Mammary epithelial cell (primary cell): ENCODE measurements at regions of chr15 and their contacts with region 1.

Region 1: DNA sequence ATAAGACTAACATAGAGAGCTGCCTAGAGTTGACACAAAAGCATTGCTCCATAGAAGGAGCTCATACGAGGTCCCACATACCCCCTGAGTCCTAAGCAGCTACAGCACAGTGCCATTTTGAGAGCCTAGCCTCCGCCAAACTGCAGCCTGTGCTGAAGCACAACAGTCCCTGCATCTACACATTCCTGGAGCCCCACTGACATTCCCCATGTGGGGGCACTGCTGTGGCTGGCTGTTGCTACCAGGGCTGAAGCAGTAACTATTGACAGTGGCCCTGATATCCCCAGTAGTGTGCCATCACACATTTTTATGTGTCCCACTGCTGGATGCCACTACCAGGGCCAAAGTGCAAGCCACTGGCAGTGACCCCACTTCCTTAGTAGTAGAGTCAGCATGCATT is 80.3 kb downstream of the CERS3 start:
- DNase-seq: no peak
- H3K4me3 ChIP-seq: no peak overlapping the region
- H3K27ac ChIP-seq: no peak overlapping the region
- H3K4me1 ChIP-seq: no peaks in the 10 kb centered on the region
- H3K27me3 ChIP-seq: no peaks in the 10 kb centered on the region
- CTCF ChIP-seq: no peak

Region 2: DNA sequence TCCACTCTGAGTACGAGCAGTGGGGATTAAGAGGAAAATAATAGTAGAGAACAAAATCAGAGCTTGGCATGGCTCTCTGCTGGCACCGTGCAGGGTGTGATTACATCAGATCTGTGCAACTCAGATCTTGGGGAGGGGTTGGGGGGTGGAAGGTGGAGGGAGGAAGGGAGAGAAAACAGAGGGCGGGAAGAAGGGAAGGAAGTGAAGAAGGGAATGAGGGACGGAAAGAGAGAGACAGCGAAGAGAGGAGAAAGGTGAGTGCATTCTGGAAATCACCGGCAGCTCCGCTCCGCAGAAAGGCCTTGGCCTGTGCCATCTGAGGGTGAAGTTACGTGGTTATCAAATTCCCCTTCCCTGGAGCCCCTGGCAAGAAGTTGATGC is 75.8 kb before region 1 on chr15:
- CTCF ChIA-PET with region 1: no interaction called
- dilution Hi-C with region 1: no loop called
- in situ Hi-C with region 1: no loop called
- intact Hi-C with region 1: no loop called
- DNase-seq: no peak
- H3K4me3 ChIP-seq: no peak overlapping the region
- H3K27ac ChIP-seq: no peak overlapping the region
- H3K4me1 ChIP-seq: no peaks in the 10 kb centered on the region
- H3K27me3 ChIP-seq: peaks cover 14% of the 10 kb centered on the region
- CTCF ChIP-seq: no peak

Region 3: DNA sequence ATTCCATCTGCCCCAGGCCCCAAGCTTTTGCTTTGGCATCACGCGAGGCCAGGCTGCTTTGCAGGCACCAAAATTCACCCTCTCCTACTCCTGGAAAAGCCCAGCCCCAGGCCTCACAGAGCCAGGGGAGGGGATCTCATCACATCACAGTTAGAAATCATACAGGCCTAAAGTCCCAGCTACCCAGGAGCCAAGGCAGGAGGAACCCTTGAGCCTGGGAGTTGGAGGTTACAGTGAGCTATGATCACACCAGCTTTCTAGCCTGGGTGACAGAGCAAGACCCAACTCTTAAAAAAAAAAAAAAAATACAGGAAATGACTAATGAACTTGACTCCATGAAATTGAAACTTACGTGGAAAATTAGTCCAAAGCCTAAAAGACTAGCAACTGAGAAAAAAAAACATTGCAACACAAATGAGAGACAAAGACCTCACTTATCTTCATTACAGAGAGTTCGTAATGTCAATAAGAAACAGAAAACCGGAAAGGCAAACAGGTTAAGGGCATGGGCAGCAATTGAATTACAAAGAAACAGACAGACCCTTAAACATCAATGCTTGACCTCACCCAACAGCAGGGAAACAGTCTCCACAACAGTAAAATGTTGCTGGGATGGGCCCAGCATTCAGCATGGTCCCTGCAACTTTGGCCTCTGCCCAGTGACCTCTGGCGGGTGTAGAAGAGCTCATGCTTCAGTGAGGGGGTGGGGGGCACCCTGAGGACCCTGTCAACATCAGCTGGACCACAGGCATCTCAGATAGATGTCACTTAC is 622.2 kb after region 1 on chr15:
- CTCF ChIA-PET with region 1: no interaction called
- dilution Hi-C with region 1: loop called (anchors 5 kb)
- in situ Hi-C with region 1: no loop called
- intact Hi-C with region 1: loop called (anchors 10 kb)
- DNase-seq: peak; percentile 90
- H3K4me3 ChIP-seq: no peak overlapping the region
- H3K27ac ChIP-seq: peak overlapping the region; percentile 90
- H3K4me1 ChIP-seq: peaks cover 32% of the 10 kb centered on the region
- H3K27me3 ChIP-seq: no peaks in the 10 kb centered on the region
- CTCF ChIP-seq: no peak